ENCODE measurements at regions of chr13 and their contacts with region 1.

Region 1: GRCh38 chr13:108155185-108156106 is 59.9 kb downstream of the LIG4 start:
- DNase-seq: peak; percentile 38
- ATAC-seq: peak; percentile 68
- H3K4me3 ChIP-seq: no peak overlapping the region
- H3K27ac ChIP-seq: no peak overlapping the region
- H3K4me1 ChIP-seq: no peaks in the 10 kb centered on the region
- H3K27me3 ChIP-seq: no peaks in the 10 kb centered on the region
- CTCF ChIP-seq: peak; percentile 43 to 89 (median 71); a peak in 5 of 6 replicates
- POLR2A ChIP-seq: no peak
- RAD21 ChIP-seq: peak; percentile 59

Region 2: DNA sequence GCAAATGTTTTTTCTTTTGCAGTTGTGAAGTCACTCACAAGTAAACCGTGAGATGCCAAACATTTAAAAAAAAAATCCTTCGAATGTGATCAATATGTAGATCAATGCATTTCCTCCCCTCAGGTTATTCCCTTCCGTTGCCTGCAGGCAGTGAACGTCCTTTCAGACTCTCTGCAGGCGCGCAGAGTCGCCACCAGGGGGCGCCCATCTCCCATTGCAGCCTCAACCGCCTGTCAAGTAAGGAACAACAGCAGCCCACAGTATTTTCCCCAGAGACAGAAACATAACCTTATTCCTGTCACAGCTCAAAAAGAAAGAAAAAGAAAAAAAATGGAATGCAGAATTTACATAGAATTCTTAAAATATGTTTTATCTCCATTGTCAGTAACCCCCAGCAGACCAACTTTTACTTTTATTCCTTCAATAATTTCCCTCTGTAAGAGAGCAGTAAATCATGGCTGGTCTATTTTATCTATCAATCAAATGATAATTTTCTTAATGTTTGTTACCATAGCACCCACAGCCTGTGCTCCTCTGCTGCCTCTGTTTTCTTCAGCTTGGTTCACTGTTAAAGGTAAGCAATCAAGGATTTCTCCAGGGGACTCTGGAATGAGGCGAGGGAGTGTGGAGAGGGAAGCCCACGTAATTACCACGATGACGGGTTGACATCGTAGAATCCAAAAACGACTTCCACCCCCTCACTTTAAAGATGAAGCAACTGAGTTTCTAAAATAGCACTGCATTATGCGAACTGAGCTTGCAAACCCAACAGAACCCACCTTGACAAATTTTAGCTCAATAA is 949.9 kb before region 1 on chr13:
- CTCF ChIA-PET with region 1: interaction called, 8 read pairs
- POLR2A ChIA-PET with region 1: no interaction called
- RAD21 ChIA-PET with region 1: no interaction called
- intact Hi-C with region 1: loop called (anchors 1 kb)
- DNase-seq: no peak
- ATAC-seq: peak; percentile 91
- H3K4me3 ChIP-seq: no peak overlapping the region
- H3K27ac ChIP-seq: no peak overlapping the region
- H3K4me1 ChIP-seq: no peaks in the 10 kb centered on the region
- H3K27me3 ChIP-seq: no peaks in the 10 kb centered on the region
- CTCF ChIP-seq: peak; percentile 14 to 94 (median 92); a peak in 5 of 6 replicates
- POLR2A ChIP-seq: no peak
- RAD21 ChIP-seq: peak; percentile 52; the same call in 1 of the 2 replicates

Region 3: GRCh38 chr13:107211073-107211472 is 944.4 kb before region 1 on chr13:
- CTCF ChIA-PET with region 1: interaction called, 6 read pairs
- POLR2A ChIA-PET with region 1: no interaction called
- RAD21 ChIA-PET with region 1: no interaction called
- intact Hi-C with region 1: loop called (anchors 1 kb)
- DNase-seq: peak; percentile 22
- ATAC-seq: peak; percentile 86
- H3K4me3 ChIP-seq: no peak overlapping the region
- H3K27ac ChIP-seq: no peak overlapping the region
- H3K4me1 ChIP-seq: no peaks in the 10 kb centered on the region
- H3K27me3 ChIP-seq: no peaks in the 10 kb centered on the region
- CTCF ChIP-seq: peak; percentile 40 to 80 (median 79); a peak in 5 of 6 replicates
- POLR2A ChIP-seq: no peak
- RAD21 ChIP-seq: peak; percentile 63

Region 4: GRCh38 chr13:108137176-108137575 is 18.3 kb before region 1 on chr13:
- CTCF ChIA-PET with region 1: interaction called, 14 read pairs
- POLR2A ChIA-PET with region 1: no interaction called
- RAD21 ChIA-PET with region 1: no interaction called
- intact Hi-C with region 1: no loop called
- DNase-seq: no peak
- ATAC-seq: no peak
- H3K4me3 ChIP-seq: no peak overlapping the region
- H3K27ac ChIP-seq: no peak overlapping the region
- H3K4me1 ChIP-seq: no peaks in the 10 kb centered on the region
- H3K27me3 ChIP-seq: no peaks in the 10 kb centered on the region
- CTCF ChIP-seq: no peak
- POLR2A ChIP-seq: no peak
- RAD21 ChIP-seq: no peak

Region 5: GRCh38 chr13:108142702-108143436 is 12.6 kb before region 1 on chr13:
- CTCF ChIA-PET with region 1: interaction called, 14 read pairs
- POLR2A ChIA-PET with region 1: no interaction called
- RAD21 ChIA-PET with region 1: no interaction called
- intact Hi-C with region 1: no loop called
- DNase-seq: no peak
- ATAC-seq: no peak
- H3K4me3 ChIP-seq: no peak overlapping the region
- H3K27ac ChIP-seq: no peak overlapping the region
- H3K4me1 ChIP-seq: no peaks in the 10 kb centered on the region
- H3K27me3 ChIP-seq: no peaks in the 10 kb centered on the region
- CTCF ChIP-seq: no peak
- POLR2A ChIP-seq: no peak
- RAD21 ChIP-seq: no peak

Measured in HCT116 (cell line).